Activated naive CD8-positive, alpha-beta T cell treated with anti-CD3 and anti-CD28 coated beads, Interleukin-2, amount 10 ng/mL, durations not matched to agents 7 days and 5 days (primary cell): ENCODE measurements at regions of chr5 and their contacts with region 1.

Region 1: GRCh38 chr5:134904630-134905245 is at the start of gene PCBD2:
- DNase-seq: peak; percentile 97
- ATAC-seq: peak; percentile 89
- H3K4me3 Mint-ChIP-seq: peak within 1 kb of the TSS; percentile 99
- H3K27ac Mint-ChIP-seq: peak within 1 kb of the TSS; percentile 100
- H3K4me1 Mint-ChIP-seq: peaks cover 13% of the 10 kb centered on the region
- H3K27me3 Mint-ChIP-seq: no peaks in the 10 kb centered on the region
- total RNA-seq, gene PCBD2: 14.4 to 15.2 TPM

Region 2: GRCh38 chr5:134738133-134738962 is 166.4 kb before region 1 on chr5 and contains the start of gene CAMLG:
- POLR2A ChIA-PET with region 1: interaction called, 32 read pairs
- DNase-seq: peak; percentile 96
- ATAC-seq: peak; percentile 99
- H3K4me3 Mint-ChIP-seq: peak within 1 kb of the TSS; percentile 93
- H3K27ac Mint-ChIP-seq: peak within 1 kb of the TSS; percentile 91
- H3K4me1 Mint-ChIP-seq: peaks cover 23% of the 10 kb centered on the region
- H3K27me3 Mint-ChIP-seq: no peaks in the 10 kb centered on the region
- total RNA-seq, gene CAMLG: 24.4 to 24.7 TPM

Region 3: GRCh38 chr5:134758504-134759341 is 146.0 kb before region 1 on chr5 and contains the start of gene DDX46:
- POLR2A ChIA-PET with region 1: interaction called, 18 read pairs
- DNase-seq: peak; percentile 95
- ATAC-seq: peak; percentile 98
- H3K4me3 Mint-ChIP-seq: peak within 1 kb of the TSS; percentile 99
- H3K27ac Mint-ChIP-seq: peak within 1 kb of the TSS; percentile 97
- H3K4me1 Mint-ChIP-seq: peaks cover 32% of the 10 kb centered on the region
- H3K27me3 Mint-ChIP-seq: no peaks in the 10 kb centered on the region
- total RNA-seq, gene DDX46: 72.7 to 76.5 TPM

Region 4: GRCh38 chr5:134845852-134846640 is 58.7 kb before region 1 on chr5 and contains the start of gene C5orf24:
- POLR2A ChIA-PET with region 1: interaction called, 28 read pairs
- DNase-seq: peak; percentile 92
- ATAC-seq: peak; percentile 95
- H3K4me3 Mint-ChIP-seq: peak within 1 kb of the TSS; percentile 94
- H3K27ac Mint-ChIP-seq: peak within 1 kb of the TSS; percentile 90
- H3K4me1 Mint-ChIP-seq: peaks cover 18% of the 10 kb centered on the region
- H3K27me3 Mint-ChIP-seq: no peaks in the 10 kb centered on the region
- total RNA-seq, gene C5orf24: 32.4 to 37.0 TPM

Region 5: GRCh38 chr5:134873987-134874830 is 30.5 kb before region 1 on chr5 and contains the start of gene TXNDC15:
- POLR2A ChIA-PET with region 1: interaction called, 21 read pairs
- DNase-seq: peak; percentile 88
- ATAC-seq: peak; percentile 89
- H3K4me3 Mint-ChIP-seq: peak within 1 kb of the TSS; percentile 92
- H3K27ac Mint-ChIP-seq: peak within 1 kb of the TSS; percentile 90
- H3K4me1 Mint-ChIP-seq: peaks cover 28% of the 10 kb centered on the region
- H3K27me3 Mint-ChIP-seq: no peaks in the 10 kb centered on the region
- total RNA-seq, gene TXNDC15: 37.7 to 41.1 TPM

Region 6: GRCh38 chr5:134935711-134936602 is 31.2 kb after region 1 on chr5:
- POLR2A ChIA-PET with region 1: no interaction called
- DNase-seq: no peak
- ATAC-seq: no peak
- H3K4me3 Mint-ChIP-seq: no peak overlapping the region
- H3K27ac Mint-ChIP-seq: no peak overlapping the region
- H3K4me1 Mint-ChIP-seq: no peaks in the 10 kb centered on the region
- H3K27me3 Mint-ChIP-seq: no peaks in the 10 kb centered on the region